Heart left ventricle (tissue), 16 donors: ENCODE measurements at regions of chr4 and their contacts with region 1.

Region 1: DNA sequence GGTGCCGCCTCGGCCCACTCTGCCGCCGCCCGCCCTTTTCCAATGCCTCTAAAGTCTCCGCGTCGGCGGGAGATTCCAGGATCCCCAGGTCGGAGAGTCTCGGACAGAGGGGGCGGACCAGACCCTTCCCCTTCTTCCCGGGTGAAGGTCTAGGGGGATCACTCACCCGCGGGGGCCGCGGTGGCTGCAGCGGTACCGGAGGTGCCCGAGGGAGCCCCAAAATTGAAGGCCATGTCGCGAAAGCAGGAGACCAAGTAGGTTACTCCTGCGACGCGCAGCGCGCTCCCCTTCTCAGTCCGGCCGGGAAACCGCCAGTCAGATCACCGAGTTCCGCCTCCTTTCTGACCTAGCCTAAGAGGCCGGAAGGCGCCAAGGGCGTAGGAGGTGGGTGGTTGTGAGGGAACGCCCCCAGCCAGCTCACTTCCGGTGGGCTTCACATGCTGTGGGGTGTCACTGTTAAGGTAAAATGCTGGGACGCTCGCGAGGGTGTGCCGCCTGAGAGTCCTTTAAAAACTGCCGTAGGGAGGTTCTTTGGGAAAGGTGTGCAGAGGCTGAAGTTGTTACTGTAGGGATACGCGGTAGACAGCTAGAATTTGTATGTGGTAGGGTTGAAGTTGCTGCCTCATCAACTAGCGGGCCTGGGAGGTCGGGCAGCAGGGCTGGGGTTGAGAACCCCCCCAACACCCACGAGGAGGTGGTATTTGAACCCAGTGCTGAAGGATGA is at the start of gene NUP54:
- DNase-seq: peak; percentile 93 to 96 (median 95)
- ATAC-seq: peak; percentile 99 to 100 (median 99)
- H3K4me3 ChIP-seq: peak within 1 kb of the TSS; percentile 65 to 97 (median 93)
- H3K27ac ChIP-seq: peak within 1 kb of the TSS; percentile 40 to 94 (median 88)
- H3K4me1 ChIP-seq: peaks cover 6 to 30% (median 25%) of the 10 kb centered on the region in 12 donors
- H3K27me3 ChIP-seq: no peaks in the 10 kb centered on the region
- CTCF ChIP-seq: no peak
- POLR2A ChIP-seq: peak in 1 of 2 donors; percentile 70
- total RNA-seq, gene NUP54: 14.2 to 26.7 (median 18.1) TPM

Region 2: DNA sequence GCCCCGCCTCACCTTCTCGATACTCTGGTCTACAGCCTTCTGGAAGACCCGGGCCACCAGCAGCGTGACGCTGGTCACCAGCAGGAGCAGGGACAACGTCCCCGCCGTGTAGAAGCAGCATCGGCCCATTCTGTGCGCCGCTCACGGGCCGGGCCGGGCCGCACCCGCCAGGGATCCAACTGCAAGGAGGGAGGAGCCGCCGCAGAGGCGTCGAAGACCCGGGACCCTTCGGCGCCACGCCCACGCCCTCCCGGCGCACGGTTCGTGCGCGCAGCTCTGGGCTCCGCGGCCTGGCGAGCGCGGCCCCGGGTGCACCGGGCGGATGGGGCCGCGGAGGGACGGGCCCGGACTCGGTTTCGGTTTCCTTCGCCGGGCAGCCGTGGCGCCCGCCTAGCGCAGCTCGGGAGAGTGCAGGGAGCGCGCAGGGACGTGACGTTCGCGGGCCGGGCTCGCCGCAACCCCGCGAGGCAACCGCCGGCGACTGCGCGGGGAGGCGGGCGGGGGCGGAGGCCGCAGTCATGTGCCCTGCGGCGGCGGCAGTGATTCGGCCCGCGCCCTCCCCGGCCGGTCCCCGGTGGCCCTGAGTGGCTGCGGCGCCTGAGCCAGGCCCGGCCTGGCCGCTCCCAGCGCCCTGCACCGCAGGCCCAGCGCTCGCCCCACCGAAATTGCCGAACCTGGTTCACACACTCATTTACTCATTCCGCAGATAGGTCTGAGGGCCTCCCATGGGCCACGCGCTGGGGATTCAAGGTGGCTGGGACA is 65.3 kb after region 1 on chr4 and contains the start of gene SCARB2:
- intact Hi-C with region 1: loop called in 1 of 10 experiments (anchors 2 kb)
- DNase-seq: peak; percentile 91 to 95 (median 93)
- ATAC-seq: peak; percentile 88 to 98 (median 94)
- H3K4me3 ChIP-seq: peak within 1 kb of the TSS; percentile 69 to 94 (median 80)
- H3K27ac ChIP-seq: peak within 1 kb of the TSS; percentile 80 to 99 (median 96)
- H3K4me1 ChIP-seq: peaks cover 19 to 69% (median 52%) of the 10 kb centered on the region in 12 donors
- H3K27me3 ChIP-seq: no peaks in the 10 kb centered on the region
- CTCF ChIP-seq: peak in 1 of 12 donors; percentile 6
- POLR2A ChIP-seq: peak in 1 of 2 donors; percentile 88
- total RNA-seq, gene SCARB2: 84.9 to 208 (median 96.0) TPM